CD4-positive, alpha-beta memory T cell (primary cell): ENCODE measurements at regions of chr2 and their contacts with region 1.

Region 1: DNA sequence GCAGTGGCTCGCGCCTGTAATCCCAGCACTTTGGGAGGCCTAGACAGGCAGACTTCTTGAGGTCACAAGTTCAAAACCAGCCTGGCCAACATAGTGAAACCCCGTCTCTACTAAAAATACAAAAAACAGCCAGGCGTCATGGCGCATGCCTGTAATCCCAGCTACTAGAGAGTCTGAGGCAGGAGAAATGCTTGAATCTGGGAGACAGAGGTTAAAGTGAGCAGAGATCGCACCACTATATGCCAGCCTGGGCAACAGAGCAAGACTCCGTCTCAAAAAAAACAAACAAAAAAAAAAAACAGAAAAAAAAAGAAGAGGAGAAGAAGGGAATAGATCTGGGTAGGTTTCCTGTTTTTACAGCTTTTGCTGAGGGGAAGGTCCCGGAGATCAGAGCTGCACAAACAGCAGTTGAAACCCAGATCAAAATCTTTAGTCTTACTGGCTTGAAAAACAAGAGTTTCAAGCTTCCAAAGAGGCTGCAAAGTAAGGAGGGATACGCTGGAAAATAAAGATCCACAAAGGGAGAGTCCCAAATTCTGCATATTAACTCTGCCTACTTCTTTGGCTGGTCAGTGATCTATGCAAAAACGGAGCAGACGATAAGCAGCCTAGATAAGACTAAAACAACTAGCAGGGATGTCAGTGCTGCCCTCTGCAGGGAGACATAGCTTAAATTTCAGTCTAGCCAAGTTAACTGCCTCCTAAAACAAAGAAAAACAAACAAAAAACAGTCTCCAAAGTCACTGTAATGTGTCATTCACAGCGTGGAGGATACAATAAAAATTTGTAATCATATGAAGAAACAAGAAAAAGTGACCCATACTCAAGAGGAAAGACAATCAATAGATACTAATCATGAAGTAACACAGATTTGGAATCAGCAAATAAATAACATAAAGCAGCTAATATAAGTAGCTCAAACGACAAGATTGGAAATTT is 74.1 kb downstream of the TLK1 start:
- DNase-seq: peak; percentile 47 to 71 (median 56)
- H3K4me3 ChIP-seq: peak overlapping the region in 1 of 2 donors; percentile 19
- H3K4me3 Mint-ChIP-seq: peak overlapping the region; percentile 74 to 90 (median 84)
- H3K27ac ChIP-seq: peak overlapping the region; percentile 30
- H3K27ac Mint-ChIP-seq: peak overlapping the region; percentile 80 to 95 (median 90)
- H3K4me1 ChIP-seq: peaks cover 72% of the 10 kb centered on the region
- H3K4me1 Mint-ChIP-seq: peaks cover 48 to 78% (median 65%) of the 10 kb centered on the region in 4 donors
- H3K27me3 ChIP-seq: no peaks in the 10 kb centered on the region
- H3K27me3 Mint-ChIP-seq: no peaks in the 10 kb centered on the region

Region 2: GRCh38 chr2:170973492-170974303 is 112.9 kb before region 1 on chr2:
- CTCF ChIA-PET with region 1: interaction called, 58 read pairs
- POLR2A ChIA-PET with region 1: interaction called, 5 read pairs
- intact Hi-C with region 1: loop called (anchors 1 kb)
- DNase-seq: peak; percentile 87 to 91 (median 87)
- H3K4me3 ChIP-seq: peak overlapping the region; percentile 26 to 77
- H3K4me3 Mint-ChIP-seq: peak overlapping the region; percentile 81 to 88 (median 84)
- H3K27ac ChIP-seq: peak overlapping the region; percentile 52
- H3K27ac Mint-ChIP-seq: peak overlapping the region; percentile 25 to 90 (median 54)
- H3K4me1 ChIP-seq: peaks cover 14% of the 10 kb centered on the region
- H3K4me1 Mint-ChIP-seq: peaks cover 7 to 16% (median 10%) of the 10 kb centered on the region in 4 donors
- H3K27me3 ChIP-seq: no peaks in the 10 kb centered on the region
- H3K27me3 Mint-ChIP-seq: no peaks in the 10 kb centered on the region

Region 3: GRCh38 chr2:171034315-171034714 is 52.3 kb before region 1 on chr2:
- CTCF ChIA-PET with region 1: interaction called, 17 read pairs
- POLR2A ChIA-PET with region 1: no interaction called
- intact Hi-C with region 1: no loop called
- DNase-seq: no peak
- H3K4me3 ChIP-seq: no peak overlapping the region
- H3K4me3 Mint-ChIP-seq: no peak overlapping the region
- H3K27ac ChIP-seq: no peak overlapping the region
- H3K27ac Mint-ChIP-seq: peak overlapping the region in 1 of 7 donors; percentile 7
- H3K4me1 ChIP-seq: no peaks in the 10 kb centered on the region
- H3K4me1 Mint-ChIP-seq: peaks cover 1 to 12% (median 10%) of the 10 kb centered on the region in 4 donors
- H3K27me3 ChIP-seq: no peaks in the 10 kb centered on the region
- H3K27me3 Mint-ChIP-seq: no peaks in the 10 kb centered on the region

Region 4: DNA sequence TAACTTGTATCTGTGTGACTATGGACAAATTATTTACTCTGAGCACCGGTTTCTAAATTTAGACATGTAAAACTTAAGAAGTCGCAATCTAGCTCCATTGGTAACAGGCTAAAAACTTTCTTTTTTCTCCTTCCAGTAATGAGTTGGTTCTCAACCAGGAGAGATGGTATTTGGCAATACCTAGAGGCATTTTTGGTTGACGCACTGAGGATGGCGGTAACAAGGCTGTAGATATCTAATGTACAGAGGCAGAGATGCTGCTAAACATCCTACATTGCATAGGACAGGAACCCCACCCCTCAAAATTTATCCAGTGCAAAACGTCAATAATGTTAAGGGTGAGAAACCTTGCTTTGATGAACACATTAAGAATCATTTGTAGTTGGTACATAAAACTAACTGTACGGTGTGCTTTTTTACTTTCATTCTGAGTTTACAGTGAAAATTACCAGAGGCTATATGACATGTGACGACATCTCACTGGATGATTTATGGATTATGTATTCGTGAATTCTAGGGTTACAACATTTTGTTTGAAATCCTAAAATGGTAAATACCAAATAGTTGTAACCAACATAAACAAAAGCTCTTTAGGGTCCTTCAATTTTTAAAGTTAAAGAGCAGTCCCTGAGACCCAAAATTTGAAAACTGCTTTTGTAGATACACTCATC is 17.2 kb before region 1 on chr2:
- CTCF ChIA-PET with region 1: interaction called, 21 read pairs
- POLR2A ChIA-PET with region 1: interaction called, 4 read pairs
- intact Hi-C with region 1: no loop called
- DNase-seq: no peak
- H3K4me3 ChIP-seq: no peak overlapping the region
- H3K4me3 Mint-ChIP-seq: no peak overlapping the region
- H3K27ac ChIP-seq: no peak overlapping the region
- H3K27ac Mint-ChIP-seq: peak overlapping the region in 1 of 7 donors; percentile 21
- H3K4me1 ChIP-seq: peaks cover 10% of the 10 kb centered on the region
- H3K4me1 Mint-ChIP-seq: peaks cover 9 to 22% (median 18%) of the 10 kb centered on the region in 4 donors
- H3K27me3 ChIP-seq: no peaks in the 10 kb centered on the region
- H3K27me3 Mint-ChIP-seq: no peaks in the 10 kb centered on the region

Region 5: GRCh38 chr2:171260471-171261424 is 174.1 kb after region 1 on chr2:
- CTCF ChIA-PET with region 1: interaction called, 11 read pairs
- POLR2A ChIA-PET with region 1: no interaction called
- intact Hi-C with region 1: no loop called
- DNase-seq: no peak
- H3K4me3 ChIP-seq: no peak overlapping the region
- H3K4me3 Mint-ChIP-seq: peak overlapping the region in 4 of 8 donors; percentile 5 to 71 (median 25)
- H3K27ac ChIP-seq: no peak overlapping the region
- H3K27ac Mint-ChIP-seq: peak overlapping the region in 6 of 7 donors; percentile 5 to 89 (median 70)
- H3K4me1 ChIP-seq: peaks cover 13% of the 10 kb centered on the region
- H3K4me1 Mint-ChIP-seq: peaks cover 9 to 16% (median 13%) of the 10 kb centered on the region in 4 donors
- H3K27me3 ChIP-seq: no peaks in the 10 kb centered on the region
- H3K27me3 Mint-ChIP-seq: no peaks in the 10 kb centered on the region

Region 6: GRCh38 chr2:171433763-171434670 is 347.4 kb after region 1 on chr2 and contains the starts of genes DCAF17 and METTL8:
- CTCF ChIA-PET with region 1: no interaction called
- POLR2A ChIA-PET with region 1: no interaction called
- intact Hi-C with region 1: loop called (anchors 5 kb)
- DNase-seq: peak; percentile 92 to 95 (median 94)
- H3K4me3 ChIP-seq: peak within 1 kb of the TSS; percentile 40 to 82
- H3K4me3 Mint-ChIP-seq: peak within 1 kb of the TSS; percentile 84 to 92 (median 90)
- H3K27ac ChIP-seq: peak within 1 kb of the TSS; percentile 91
- H3K27ac Mint-ChIP-seq: peak within 1 kb of the TSS; percentile 79 to 98 (median 96)
- H3K4me1 ChIP-seq: peaks cover 30% of the 10 kb centered on the region
- H3K4me1 Mint-ChIP-seq: peaks cover 32 to 52% (median 40%) of the 10 kb centered on the region in 4 donors
- H3K27me3 ChIP-seq: no peaks in the 10 kb centered on the region
- H3K27me3 Mint-ChIP-seq: no peaks in the 10 kb centered on the region
- total RNA-seq, gene DCAF17: 26.6 to 30.3 TPM
- total RNA-seq, gene METTL8: 17.5 to 19.2 TPM